ENCODE measurements at regions of chr5 and their contacts with region 1.

Region 1: DNA sequence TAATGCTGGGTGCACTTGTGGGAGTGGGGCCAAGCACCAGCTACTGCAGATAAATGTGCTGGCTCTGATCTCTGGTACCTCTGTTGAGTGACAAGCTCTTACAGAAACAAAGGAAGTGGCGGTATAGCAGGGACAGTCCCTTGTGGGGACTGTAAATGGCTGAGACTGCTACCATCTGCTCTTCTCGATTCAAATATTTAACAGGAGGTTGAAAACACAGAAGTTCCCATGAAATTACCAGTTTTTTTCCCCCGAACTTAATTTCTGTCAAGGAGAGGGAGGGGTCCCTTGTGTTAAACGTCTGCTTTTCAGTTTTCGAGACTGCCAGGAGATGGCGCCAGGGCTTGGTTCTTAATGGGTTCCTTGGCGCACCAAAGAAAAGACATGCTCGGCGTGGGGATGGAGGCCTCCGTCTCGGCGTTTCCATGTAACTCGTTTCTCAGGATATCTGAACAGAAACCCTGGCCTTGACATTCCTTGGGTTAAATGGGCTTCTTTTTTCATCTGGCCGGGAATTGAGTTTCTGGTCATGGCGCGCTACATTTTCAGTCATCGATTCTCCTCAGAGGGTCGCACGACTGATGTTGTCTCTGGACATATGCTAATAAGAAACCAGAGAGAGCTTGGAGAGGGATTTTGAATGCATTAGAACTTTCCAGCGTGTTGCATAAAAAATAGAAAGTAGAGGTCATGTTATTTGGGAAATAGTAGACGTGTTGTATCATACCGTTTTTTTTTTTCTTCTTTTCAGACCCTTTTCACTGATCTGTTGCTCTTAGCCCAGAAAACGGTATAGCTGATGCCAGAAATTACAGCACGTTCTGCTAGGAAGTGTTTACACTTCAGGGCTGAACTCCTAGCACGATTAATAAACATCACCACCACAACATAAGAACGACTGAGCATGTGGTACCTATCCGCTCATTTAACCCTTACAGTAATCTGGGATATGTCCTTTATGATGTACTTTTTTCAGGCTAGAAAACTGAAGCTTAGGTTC is 64.0 kb downstream of the CARTPT start:
- DNase-seq: peak; percentile 75 to 95 (median 82)
- H3K4me3 ChIP-seq: peak overlapping the region in 1 of 4 donors; percentile 38
- H3K27ac ChIP-seq: peak overlapping the region in 1 of 5 donors; percentile 39
- H3K4me1 ChIP-seq: peaks cover 0 to 9% of the 10 kb centered on the region in 2 donors
- H3K27me3 ChIP-seq: no peaks in the 10 kb centered on the region
- CTCF ChIP-seq: peak; percentile 57 to 85 (median 78)
- POLR2A ChIP-seq: no peak

Region 2: DNA sequence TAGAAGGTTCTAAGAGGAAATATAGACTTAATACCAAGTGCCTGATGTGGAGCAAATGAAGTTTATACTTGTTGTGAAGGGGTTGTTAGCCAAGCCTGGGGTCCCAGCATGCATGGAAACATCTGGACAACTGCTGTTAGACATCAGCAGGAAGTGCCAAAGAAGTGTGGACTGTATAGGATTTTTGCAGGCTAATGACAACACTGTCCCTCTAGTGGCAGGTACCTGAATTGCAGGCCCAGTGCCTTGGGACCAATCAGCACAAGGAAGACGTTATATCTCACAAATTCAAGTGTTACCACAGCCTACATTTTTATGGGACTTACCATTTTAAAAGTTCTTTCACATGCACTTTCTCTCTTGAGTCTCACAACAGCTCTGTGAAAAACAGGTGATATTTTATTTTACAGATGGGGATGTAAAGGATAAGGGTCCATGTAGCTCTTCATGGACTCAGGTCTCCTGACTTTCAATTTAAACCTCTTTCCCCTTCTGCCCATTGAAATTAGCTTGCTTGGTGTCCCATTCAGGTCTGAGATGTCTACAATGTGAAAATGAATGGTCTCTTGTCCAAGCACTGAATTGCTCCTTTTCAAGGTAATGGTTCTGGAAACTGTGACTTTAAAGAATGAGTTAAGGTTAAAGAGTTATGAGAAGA is 235.2 kb after region 1 on chr5:
- intact Hi-C with region 1: loop called in 1 of 2 experiments (anchors 10 kb)
- DNase-seq: peak in 6 of 7 donors; percentile 35 to 78 (median 52)
- H3K4me3 ChIP-seq: no peak overlapping the region
- H3K27ac ChIP-seq: no peak overlapping the region
- H3K4me1 ChIP-seq: peaks cover 0 to 6% of the 10 kb centered on the region in 2 donors
- H3K27me3 ChIP-seq: peaks cover 4% of the 10 kb centered on the region
- CTCF ChIP-seq: peak; percentile 65 to 86 (median 82)
- POLR2A ChIP-seq: no peak

Region 3: GRCh38 chr5:72307968-72308852 is 525.1 kb after region 1 on chr5:
- intact Hi-C with region 1: loop called in 1 of 2 experiments (anchors 5 kb)
- DNase-seq: peak; percentile 97 to 99 (median 99)
- H3K4me3 ChIP-seq: peak overlapping the region; percentile 1 to 84 (median 56)
- H3K27ac ChIP-seq: peak overlapping the region; percentile 66 to 96 (median 93)
- H3K4me1 ChIP-seq: peaks cover 12 to 14% of the 10 kb centered on the region in 2 donors
- H3K27me3 ChIP-seq: no peaks in the 10 kb centered on the region
- CTCF ChIP-seq: peak; percentile 73 to 96 (median 92)
- POLR2A ChIP-seq: peak; percentile 93 to 99

Region 4: GRCh38 chr5:72319976-72320752 is 537.1 kb after region 1 on chr5 and contains the starts of genes MRPS27 and PTCD2:
- intact Hi-C with region 1: loop called in 1 of 2 experiments (anchors 10 kb)
- DNase-seq: peak; percentile 95 to 99 (median 98)
- H3K4me3 ChIP-seq: peak within 1 kb of the TSS in 3 of 4 donors; percentile 55 to 67 (median 67)
- H3K27ac ChIP-seq: peak within 1 kb of the TSS in 4 of 5 donors; percentile 7 to 74 (median 52)
- H3K4me1 ChIP-seq: peaks cover 14 to 19% of the 10 kb centered on the region in 2 donors
- H3K27me3 ChIP-seq: no peaks in the 10 kb centered on the region
- CTCF ChIP-seq: peak in 1 of 6 experiments; percentile 11
- POLR2A ChIP-seq: peak; percentile 28 to 76
- total RNA-seq, gene MRPS27: 61.1 to 91.9 (median 67.3) TPM
- total RNA-seq, gene PTCD2: 11.9 to 20.6 (median 14.8) TPM

Measured in adrenal gland (tissue), 19 donors.